ENCODE measurements at regions of chr9 and their contacts with region 1.

Region 1: GRCh38 chr9:32378993-32379729 is 5.3 kb upstream of the ACO1 start:
- ATAC-seq: peak in 7 of 8 experiments; percentile 42 to 76 (median 58)
- H3K4me3 ChIP-seq: no peak overlapping the region
- H3K27ac ChIP-seq: no peak overlapping the region
- H3K4me1 ChIP-seq: peaks cover 0 to 2% of the 10 kb centered on the region in 2 donors

Region 2: GRCh38 chr9:32550562-32551433 is 171.6 kb after region 1 on chr9:
- in situ Hi-C with region 1: loop called in 3 of 9 experiments (anchors 25 kb)
- ATAC-seq: peak; percentile 54 to 91 (median 87)
- H3K4me3 ChIP-seq: peak overlapping the region; percentile 75 to 100 (median 96)
- H3K27ac ChIP-seq: peak overlapping the region; percentile 67 to 96
- H3K4me1 ChIP-seq: peaks cover 4 to 6% of the 10 kb centered on the region in 2 donors

Region 3: DNA sequence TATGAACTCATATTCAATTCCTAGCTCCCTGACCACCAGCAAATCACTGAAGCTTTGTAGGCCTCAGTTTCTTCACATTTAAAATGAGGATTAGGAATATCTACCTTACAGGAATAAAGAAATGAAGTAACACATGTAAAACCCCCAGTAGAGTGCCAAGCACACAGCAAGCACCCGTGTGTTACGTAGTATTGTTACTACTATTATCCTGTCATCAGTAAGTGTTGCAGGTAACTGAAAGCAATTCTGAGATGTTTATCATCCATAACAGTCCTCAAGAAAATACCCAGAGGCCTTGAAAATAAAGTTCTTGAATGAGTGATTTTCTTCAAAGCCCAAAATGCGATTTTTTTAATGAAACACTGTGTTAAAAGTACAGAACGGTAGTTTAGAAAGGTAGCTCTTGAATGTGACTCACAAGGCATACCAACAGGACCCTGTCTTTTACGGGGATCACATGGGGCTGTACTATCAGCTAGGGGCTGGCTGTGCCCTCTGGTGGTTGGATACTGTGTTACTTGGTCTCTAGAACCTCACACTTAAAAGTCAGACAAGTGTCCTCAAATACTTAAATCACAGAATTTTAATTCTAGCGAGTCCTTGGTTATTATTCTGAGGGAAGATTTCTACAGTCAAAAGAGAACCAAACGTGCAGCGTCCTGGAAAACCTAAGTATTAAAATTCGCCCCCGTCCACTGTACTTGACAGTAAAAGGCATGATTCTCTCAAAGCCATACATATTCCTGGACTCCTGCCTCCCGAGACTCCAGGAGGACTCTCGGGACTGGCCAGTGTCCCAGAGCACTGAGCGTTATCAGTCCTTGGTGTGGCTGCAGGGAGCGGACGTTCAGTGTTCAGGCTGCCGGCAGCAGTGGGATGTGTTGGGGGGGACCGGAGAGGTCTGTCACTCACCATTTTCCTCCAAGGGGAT is 193.1 kb after region 1 on chr9:
- in situ Hi-C with region 1: loop called (anchors 10 to 25 kb)
- ATAC-seq: peak; percentile 61 to 82 (median 78)
- H3K4me3 ChIP-seq: peak overlapping the region; percentile 56 to 90 (median 86)
- H3K27ac ChIP-seq: peak overlapping the region; percentile 66 to 93
- H3K4me1 ChIP-seq: peaks cover 0 to 12% of the 10 kb centered on the region in 2 donors

Region 4: GRCh38 chr9:32579706-32580331 is 200.7 kb after region 1 on chr9:
- in situ Hi-C with region 1: loop called in 6 of 9 experiments (anchors 10 to 25 kb)
- ATAC-seq: peak in 4 of 8 experiments; percentile 24 to 65 (median 53)
- H3K4me3 ChIP-seq: no peak overlapping the region
- H3K27ac ChIP-seq: no peak overlapping the region
- H3K4me1 ChIP-seq: no peaks in the 10 kb centered on the region

Region 5: DNA sequence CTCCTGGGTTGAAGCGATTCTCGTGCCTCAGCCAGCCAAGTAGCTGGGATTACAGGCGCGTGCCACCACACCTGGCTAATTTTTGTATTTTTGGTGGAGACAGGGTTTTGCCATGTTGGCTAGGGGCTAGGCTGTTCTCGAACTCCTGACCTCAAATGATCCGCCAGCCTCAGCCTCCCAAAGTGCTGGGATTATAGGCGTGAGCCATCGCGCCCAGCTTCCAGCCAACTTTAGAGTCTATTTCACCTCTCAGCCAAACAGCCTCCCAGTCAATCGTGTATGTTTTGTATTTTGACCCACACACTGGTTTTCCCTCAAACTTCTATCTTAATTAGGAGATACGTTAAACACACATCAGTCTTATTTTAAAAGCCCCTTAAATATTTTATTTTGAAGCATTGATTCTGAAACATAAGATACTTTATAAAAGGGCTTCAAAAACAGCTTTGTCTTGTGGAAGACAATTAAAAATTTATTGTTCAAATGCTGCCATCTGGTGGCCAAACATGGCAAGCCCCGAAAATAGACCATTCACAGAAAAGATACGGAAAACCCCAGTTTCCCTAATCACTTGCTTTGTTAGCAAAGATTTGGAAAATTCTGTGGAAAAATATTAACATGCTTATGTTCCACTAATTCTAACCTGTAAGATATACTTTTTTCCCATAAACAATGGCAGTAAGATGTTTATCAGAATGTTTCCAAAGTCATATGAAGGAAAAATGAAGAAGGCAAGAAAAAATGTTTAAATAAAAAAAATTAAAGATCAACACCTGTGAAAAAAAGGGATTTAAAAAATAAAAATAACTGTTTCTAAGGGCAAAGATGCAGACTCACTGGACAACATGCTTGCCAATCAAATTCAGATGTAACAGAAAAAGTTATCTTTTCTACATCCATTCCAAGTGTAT is 589.2 kb after region 1 on chr9:
- in situ Hi-C with region 1: loop called in 6 of 9 experiments (anchors 10 to 25 kb)
- ATAC-seq: peak in 1 of 8 experiments; percentile 23
- H3K4me3 ChIP-seq: no peak overlapping the region
- H3K27ac ChIP-seq: no peak overlapping the region
- H3K4me1 ChIP-seq: no peaks in the 10 kb centered on the region

Region 6: GRCh38 chr9:32992595-32993238 is 613.6 kb after region 1 on chr9:
- in situ Hi-C with region 1: loop called in 2 of 9 experiments (anchors 25 kb)
- ATAC-seq: no peak
- H3K4me3 ChIP-seq: no peak overlapping the region
- H3K27ac ChIP-seq: no peak overlapping the region
- H3K4me1 ChIP-seq: peaks cover 0 to 2% of the 10 kb centered on the region in 2 donors